ENCODE measurements at regions of chr1 and their contacts with region 1.

Region 1: GRCh38 chr1:153922972-153923925 is at the start of gene GATAD2B:
- DNase-seq: peak; percentile 99
- ATAC-seq: peak; percentile 94
- H3K4me3 Mint-ChIP-seq: peak within 1 kb of the TSS; percentile 89
- H3K27ac Mint-ChIP-seq: peak within 1 kb of the TSS; percentile 97
- H3K4me1 Mint-ChIP-seq: peaks cover 36% of the 10 kb centered on the region
- H3K27me3 Mint-ChIP-seq: no peaks in the 10 kb centered on the region
- total RNA-seq, gene GATAD2B: 57.0 to 63.9 TPM

Region 2: GRCh38 chr1:153727463-153728304 is 195.6 kb before region 1 on chr1 and contains the start of gene INTS3:
- CTCF ChIA-PET with region 1: interaction called, 3 read pairs
- POLR2A ChIA-PET with region 1: interaction called, 3 read pairs
- intact Hi-C with region 1: loop called in 1 of 2 experiments (anchors 1 kb)
- DNase-seq: peak; percentile 99
- ATAC-seq: peak; percentile 99
- H3K4me3 Mint-ChIP-seq: peak within 1 kb of the TSS; percentile 93
- H3K27ac Mint-ChIP-seq: peak within 1 kb of the TSS; percentile 95
- H3K4me1 Mint-ChIP-seq: peaks cover 44% of the 10 kb centered on the region
- H3K27me3 Mint-ChIP-seq: no peaks in the 10 kb centered on the region
- total RNA-seq, gene INTS3: 52.0 to 58.0 TPM

Region 3: GRCh38 chr1:153805042-153805745 is 118.1 kb before region 1 on chr1:
- CTCF ChIA-PET with region 1: interaction called, 4 read pairs
- POLR2A ChIA-PET with region 1: no interaction called
- intact Hi-C with region 1: loop called (anchors 1 to 2 kb)
- DNase-seq: peak; percentile 87
- ATAC-seq: peak; percentile 98
- H3K4me3 Mint-ChIP-seq: peak overlapping the region; percentile 28
- H3K27ac Mint-ChIP-seq: peak overlapping the region; percentile 85
- H3K4me1 Mint-ChIP-seq: peaks cover 30% of the 10 kb centered on the region
- H3K27me3 Mint-ChIP-seq: no peaks in the 10 kb centered on the region

Region 4: DNA sequence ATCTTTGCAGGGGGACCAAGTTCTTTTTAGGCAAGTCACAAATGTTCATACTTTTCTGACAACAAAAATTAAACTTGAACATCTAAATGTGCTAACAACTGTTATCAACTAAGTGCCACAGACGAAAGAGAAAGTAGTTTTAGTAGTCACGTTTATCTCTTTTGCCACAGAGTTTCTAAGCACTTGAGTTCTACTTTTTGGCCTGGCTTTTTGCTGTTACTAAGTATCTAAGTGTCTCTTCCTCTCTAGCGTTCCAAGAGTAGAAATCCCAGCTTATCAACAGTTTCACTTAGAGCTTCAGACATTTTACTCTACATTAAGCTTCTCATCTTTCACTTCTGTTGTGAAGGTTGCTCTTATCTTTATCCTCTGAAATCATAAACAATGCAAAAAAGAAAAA is 34.7 kb before region 1 on chr1:
- CTCF ChIA-PET with region 1: interaction called, 3 read pairs
- POLR2A ChIA-PET with region 1: no interaction called
- intact Hi-C with region 1: loop called in 1 of 2 experiments (anchors 5 kb)
- DNase-seq: no peak
- ATAC-seq: peak; percentile 58
- H3K4me3 Mint-ChIP-seq: peak overlapping the region; percentile 23
- H3K27ac Mint-ChIP-seq: peak overlapping the region; percentile 88
- H3K4me1 Mint-ChIP-seq: peaks cover 39% of the 10 kb centered on the region
- H3K27me3 Mint-ChIP-seq: no peaks in the 10 kb centered on the region

Region 5: DNA sequence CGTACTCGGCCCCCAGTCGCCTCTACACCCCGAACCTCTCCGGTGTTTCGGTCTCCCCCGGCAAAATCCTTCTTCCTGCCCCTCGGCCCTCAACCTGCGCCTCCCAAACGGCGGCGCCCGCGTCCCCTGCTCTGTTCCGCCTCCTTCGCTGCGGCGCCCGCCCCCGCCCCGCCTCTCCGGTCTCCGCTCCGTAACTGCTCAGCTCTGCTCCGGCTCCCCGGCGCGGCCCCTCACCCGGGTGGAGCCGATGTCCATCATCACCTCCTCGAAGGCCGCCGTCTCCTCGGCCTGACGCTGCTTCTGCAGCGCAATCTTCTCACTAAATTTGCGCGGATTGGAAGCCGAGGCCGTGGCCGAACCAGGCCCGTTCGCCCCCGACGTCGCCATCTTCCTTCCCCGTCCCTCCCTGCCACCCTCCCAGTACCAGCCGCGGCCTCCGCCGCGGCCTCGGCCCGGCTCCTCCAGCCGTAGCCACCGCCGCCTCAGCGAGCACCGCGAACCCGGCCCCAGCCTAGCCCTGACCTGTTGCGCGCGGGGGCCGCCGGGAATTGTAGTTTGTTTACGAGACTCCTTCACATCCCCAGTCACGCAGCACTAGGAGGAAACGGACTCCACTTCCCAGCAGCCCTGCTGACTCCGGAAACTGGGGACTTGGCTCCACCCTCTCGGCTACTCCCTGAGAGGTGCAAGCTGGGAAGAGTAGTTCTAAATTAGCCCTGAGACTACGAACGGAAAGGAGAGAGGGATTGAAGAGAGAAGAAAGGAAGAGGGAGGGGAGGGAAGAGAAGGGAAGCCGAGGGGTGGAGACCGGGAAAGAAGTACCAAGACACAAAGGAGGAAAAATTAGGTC is 35.1 kb after region 1 on chr1 and contains the start of gene CRTC2:
- CTCF ChIA-PET with region 1: interaction called, 3 read pairs
- POLR2A ChIA-PET with region 1: interaction called, 6 read pairs
- intact Hi-C with region 1: loop called (anchors 1 kb)
- DNase-seq: peak; percentile 99
- ATAC-seq: peak; percentile 90
- H3K4me3 Mint-ChIP-seq: peak within 1 kb of the TSS; percentile 99
- H3K27ac Mint-ChIP-seq: peak within 1 kb of the TSS; percentile 95
- H3K4me1 Mint-ChIP-seq: peaks cover 55% of the 10 kb centered on the region
- H3K27me3 Mint-ChIP-seq: no peaks in the 10 kb centered on the region
- total RNA-seq, gene CRTC2: 60.6 to 80.4 TPM

Region 6: DNA sequence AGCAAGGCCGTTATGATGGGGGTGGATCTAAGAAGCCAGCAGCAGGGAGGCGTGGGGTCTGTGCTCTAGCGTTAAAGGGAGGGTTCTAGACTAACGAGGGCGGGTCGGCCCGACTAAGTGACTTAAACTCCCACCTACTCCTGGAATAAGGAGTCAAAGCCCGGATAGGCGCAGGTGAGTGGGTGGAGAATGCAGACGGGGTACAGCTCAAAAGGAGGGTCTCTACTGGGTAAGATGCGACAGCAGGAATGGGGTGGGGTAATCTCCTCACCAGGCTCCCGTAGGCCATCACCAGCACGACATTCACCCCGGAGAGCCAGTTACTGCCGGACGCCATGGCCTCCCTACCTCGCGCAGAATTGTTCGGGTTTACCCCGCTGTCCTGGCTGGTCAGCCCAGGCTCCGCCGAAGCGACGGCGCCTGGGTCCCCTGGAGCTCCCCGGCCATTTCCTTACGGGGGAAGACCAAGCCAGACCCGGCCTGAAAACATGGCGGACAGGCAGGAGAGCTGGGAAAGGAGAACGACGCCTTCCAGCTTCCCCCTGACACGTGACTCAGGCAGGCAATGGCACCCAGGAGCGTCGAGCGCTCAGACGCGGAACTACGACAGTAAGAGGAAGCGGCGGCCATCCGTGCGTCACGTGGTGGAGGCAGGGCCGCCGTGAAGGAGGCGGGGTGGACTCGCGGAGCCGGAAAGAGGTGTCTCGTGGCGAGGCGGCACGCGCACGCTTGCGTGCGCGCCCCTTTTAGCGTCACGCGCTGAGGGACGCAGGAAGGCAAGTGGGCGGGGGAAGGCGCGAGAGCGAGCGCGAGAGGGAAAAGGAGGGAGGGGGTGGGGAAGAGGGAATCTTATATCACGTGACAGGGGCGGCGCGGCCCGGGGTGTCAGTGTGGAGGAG is 297.1 kb after region 1 on chr1 and contains the start of gene UBAP2L:
- CTCF ChIA-PET with region 1: no interaction called
- POLR2A ChIA-PET with region 1: no interaction called
- intact Hi-C with region 1: loop called (anchors 1 kb)
- DNase-seq: peak; percentile 99
- ATAC-seq: peak; percentile 92
- H3K4me3 Mint-ChIP-seq: peak within 1 kb of the TSS; percentile 99
- H3K27ac Mint-ChIP-seq: peak within 1 kb of the TSS; percentile 100
- H3K4me1 Mint-ChIP-seq: peaks cover 70% of the 10 kb centered on the region
- H3K27me3 Mint-ChIP-seq: no peaks in the 10 kb centered on the region
- total RNA-seq, gene UBAP2L: 205 to 255 TPM

Measured in activated CD4-positive, alpha-beta T cell treated with anti-CD3 and anti-CD28 coated beads for 36 hours (primary cell).